Calu3 (cell line): ENCODE measurements at regions of chr5 and their contacts with region 1.

Region 1: GRCh38 chr5:68798877-68799843 is 294.7 kb upstream of the SLC30A5 start:
- DNase-seq: no peak
- H3K4me3 Mint-ChIP-seq: no peak overlapping the region
- H3K27ac Mint-ChIP-seq: no peak overlapping the region
- H3K4me1 Mint-ChIP-seq: no peaks in the 10 kb centered on the region
- H3K27me3 Mint-ChIP-seq: peaks cover 17% of the 10 kb centered on the region
- CTCF ChIP-seq: no peak

Region 2: DNA sequence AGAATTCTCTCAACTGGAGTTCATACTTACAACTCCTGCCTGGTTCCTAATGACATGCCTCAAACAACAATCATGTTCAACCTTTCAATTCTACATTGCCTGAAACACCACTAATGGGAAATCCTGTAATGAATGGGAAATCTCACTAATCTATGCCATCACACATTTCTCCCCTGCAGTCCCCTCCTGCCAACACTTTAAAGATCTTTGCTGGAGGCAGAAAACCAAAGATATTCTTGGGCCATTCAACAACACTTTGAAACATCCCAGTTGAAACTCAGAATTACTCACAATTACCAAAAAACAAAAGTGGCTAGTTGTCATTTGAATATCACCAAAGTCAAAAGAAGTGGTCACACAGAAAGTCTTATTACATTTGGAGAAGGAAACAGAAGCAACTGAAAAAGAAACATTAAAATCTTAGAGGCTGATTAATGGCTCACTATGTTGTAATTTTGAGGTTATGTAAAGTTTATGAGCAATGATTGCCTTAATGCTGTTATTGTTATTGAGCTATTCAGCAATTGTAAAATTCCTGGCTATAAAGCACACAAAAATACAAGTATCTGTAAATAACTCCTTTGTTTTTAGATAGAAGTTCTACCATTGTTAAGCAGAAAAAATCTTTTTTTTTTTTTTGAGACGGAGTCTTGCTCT is 18.7 kb before region 1 on chr5:
- CTCF ChIA-PET with region 1: no interaction called
- intact Hi-C with region 1: loop called (anchors 2 kb)
- DNase-seq: no peak
- H3K4me3 Mint-ChIP-seq: no peak overlapping the region
- H3K27ac Mint-ChIP-seq: no peak overlapping the region
- H3K4me1 Mint-ChIP-seq: no peaks in the 10 kb centered on the region
- H3K27me3 Mint-ChIP-seq: no peaks in the 10 kb centered on the region
- CTCF ChIP-seq: no peak